PC-9 (cell line): ENCODE measurements at regions of chr2 and their contacts with region 1.

Region 1: GRCh38 chr2:69724540-69725159 is 17.3 kb upstream of the ANXA4 start:
- DNase-seq: peak; percentile 62 to 84
- H3K4me3 ChIP-seq: no peak overlapping the region
- H3K27ac ChIP-seq: no peak overlapping the region
- H3K4me1 ChIP-seq: no peaks in the 10 kb centered on the region
- H3K27me3 ChIP-seq: no peaks in the 10 kb centered on the region
- CTCF ChIP-seq: peak; percentile 95

Region 2: DNA sequence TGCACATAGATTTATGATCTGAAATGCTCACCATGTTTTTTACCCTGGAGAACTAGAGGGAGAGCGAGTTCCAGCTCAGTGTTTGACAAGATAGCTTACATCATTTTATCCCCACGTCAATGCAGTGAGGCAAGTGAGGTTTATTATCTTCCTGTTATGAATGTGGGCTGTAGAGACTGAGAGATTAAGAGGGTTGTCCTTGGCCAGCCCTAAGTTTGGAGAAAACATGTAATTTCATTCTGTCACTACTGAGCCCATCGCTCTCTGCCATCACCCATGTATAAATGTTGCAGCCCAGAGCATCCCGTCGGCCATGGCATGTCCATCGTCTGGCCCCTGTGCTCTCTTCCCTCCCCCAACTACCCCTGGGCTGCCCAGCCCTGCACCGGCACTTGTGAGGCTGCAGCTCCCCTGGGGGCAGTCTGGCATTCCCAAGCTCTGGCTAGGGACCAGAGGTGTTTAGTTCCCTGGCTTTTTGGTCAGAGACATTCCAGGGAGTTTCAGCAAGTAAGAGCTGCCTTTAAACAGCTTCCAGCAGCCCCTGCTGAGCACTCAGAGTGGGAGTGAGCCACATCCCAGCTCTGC is 574.9 kb before region 1 on chr2:
- CTCF ChIA-PET with region 1: no interaction called
- POLR2A ChIA-PET with region 1: no interaction called
- intact Hi-C with region 1: no loop called
- DNase-seq: no peak
- H3K4me3 ChIP-seq: no peak overlapping the region
- H3K27ac ChIP-seq: no peak overlapping the region
- H3K4me1 ChIP-seq: no peaks in the 10 kb centered on the region
- H3K27me3 ChIP-seq: no peaks in the 10 kb centered on the region
- CTCF ChIP-seq: no peak

Region 3: GRCh38 chr2:69741619-69742466 is 17.2 kb after region 1 on chr2 and contains the start of gene ANXA4:
- CTCF ChIA-PET with region 1: interaction called, 14 read pairs
- POLR2A ChIA-PET with region 1: no interaction called
- intact Hi-C with region 1: no loop called
- DNase-seq: peak; percentile 71 to 86
- H3K4me3 ChIP-seq: peak within 1 kb of the TSS; percentile 71
- H3K27ac ChIP-seq: peak within 1 kb of the TSS; percentile 72
- H3K4me1 ChIP-seq: peaks cover 51% of the 10 kb centered on the region
- H3K27me3 ChIP-seq: no peaks in the 10 kb centered on the region
- CTCF ChIP-seq: no peak
- total RNA-seq, gene ANXA4: 82.9 and 109 TPM in 2 replicates

Region 4: GRCh38 chr2:69798909-69799526 is 74.4 kb after region 1 on chr2:
- CTCF ChIA-PET with region 1: interaction called, 3 read pairs
- POLR2A ChIA-PET with region 1: no interaction called
- intact Hi-C with region 1: loop called (anchors 5 kb)
- DNase-seq: peak; percentile 37 to 75
- H3K4me3 ChIP-seq: no peak overlapping the region
- H3K27ac ChIP-seq: peak overlapping the region; percentile 40
- H3K4me1 ChIP-seq: peaks cover 26% of the 10 kb centered on the region
- H3K27me3 ChIP-seq: no peaks in the 10 kb centered on the region
- CTCF ChIP-seq: no peak

Region 5: GRCh38 chr2:69893684-69894551 is 169.3 kb after region 1 on chr2 and contains the start of gene SNRNP27:
- CTCF ChIA-PET with region 1: interaction called, 3 read pairs
- POLR2A ChIA-PET with region 1: no interaction called
- intact Hi-C with region 1: loop called (anchors 5 kb)
- DNase-seq: peak; percentile 60 to 67
- H3K4me3 ChIP-seq: peak within 1 kb of the TSS; percentile 74
- H3K27ac ChIP-seq: peak within 1 kb of the TSS; percentile 38
- H3K4me1 ChIP-seq: peaks cover 13% of the 10 kb centered on the region
- H3K27me3 ChIP-seq: no peaks in the 10 kb centered on the region
- CTCF ChIP-seq: no peak
- total RNA-seq, gene SNRNP27: 29.9 and 38.1 TPM in 2 replicates